Aorta (tissue), 5 donors: ENCODE measurements at regions of chr10 and their contacts with region 1.

Region 1: GRCh38 chr10:84537447-84537931 is 209.1 kb downstream of the CCSER2 start:
- DNase-seq: peak; percentile 63 to 82
- ATAC-seq: peak; percentile 87
- H3K4me3 ChIP-seq: no peak overlapping the region
- H3K27ac ChIP-seq: no peak overlapping the region
- H3K4me1 ChIP-seq: no peaks in the 10 kb centered on the region
- H3K27me3 ChIP-seq: no peaks in the 10 kb centered on the region

Region 2: GRCh38 chr10:84139126-84140035 is 398.1 kb before region 1 on chr10 and contains the start of gene GHITM:
- intact Hi-C with region 1: loop called in 1 of 2 experiments (anchors 10 kb)
- DNase-seq: peak; percentile 99
- ATAC-seq: peak; percentile 99
- H3K4me3 ChIP-seq: peak within 1 kb of the TSS; percentile 73 to 90
- H3K27ac ChIP-seq: peak within 1 kb of the TSS; percentile 51 to 74
- H3K4me1 ChIP-seq: peaks cover 0 to 3% of the 10 kb centered on the region in 2 donors
- H3K27me3 ChIP-seq: no peaks in the 10 kb centered on the region
- total RNA-seq, gene GHITM: 77.2 to 88.3 TPM

Region 3: DNA sequence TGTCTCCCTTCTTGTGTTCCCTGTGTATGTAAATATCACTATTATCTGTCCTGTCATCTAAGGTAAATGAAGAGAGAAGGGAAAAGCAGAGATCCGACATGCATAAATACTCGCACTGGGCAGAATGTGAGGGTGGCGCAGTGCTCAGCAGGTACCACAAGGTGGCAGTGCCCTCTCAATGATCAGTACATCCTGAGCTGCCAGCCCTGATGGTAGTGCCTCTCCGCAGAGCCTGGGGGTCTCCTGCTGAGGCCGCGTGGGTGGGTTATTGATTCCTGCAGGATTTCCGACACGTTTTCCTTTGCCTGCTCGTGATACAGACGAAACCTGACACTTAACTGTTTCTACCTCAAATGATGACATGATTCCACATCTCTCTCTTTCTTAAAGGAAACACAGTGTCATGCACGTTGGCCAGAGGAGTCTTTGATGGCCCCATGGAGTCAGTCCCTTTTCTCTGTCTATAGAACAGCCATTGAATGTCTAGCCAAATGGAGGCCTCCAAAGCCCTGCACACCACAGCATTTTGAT is 272.8 kb before region 1 on chr10:
- intact Hi-C with region 1: loop called (anchors 1 to 2 kb)
- DNase-seq: peak; percentile 75 to 89
- ATAC-seq: peak; percentile 82
- H3K4me3 ChIP-seq: no peak overlapping the region
- H3K27ac ChIP-seq: no peak overlapping the region
- H3K4me1 ChIP-seq: no peaks in the 10 kb centered on the region
- H3K27me3 ChIP-seq: no peaks in the 10 kb centered on the region

Region 4: DNA sequence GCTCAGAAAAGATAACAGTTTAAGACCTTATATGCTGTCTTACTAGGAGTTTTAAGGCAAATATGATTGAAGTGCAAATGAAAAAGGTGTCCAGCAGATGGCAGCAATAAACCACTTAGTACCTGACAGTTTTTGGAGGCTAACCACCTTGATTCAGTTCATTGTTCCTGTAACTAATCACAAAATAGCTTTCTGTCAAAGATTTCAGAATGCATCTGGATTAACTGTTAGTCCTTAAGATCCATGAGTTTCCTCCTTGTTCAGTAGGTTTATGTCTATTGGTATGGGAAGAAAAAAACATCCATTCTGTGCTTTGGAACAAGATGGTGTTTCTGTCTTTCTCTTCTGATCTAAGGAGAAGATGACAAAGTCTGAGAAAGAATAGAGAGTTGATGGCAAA is 162.5 kb before region 1 on chr10:
- intact Hi-C with region 1: loop called (anchors 2 kb)
- DNase-seq: no peak
- ATAC-seq: no peak
- H3K4me3 ChIP-seq: no peak overlapping the region
- H3K27ac ChIP-seq: no peak overlapping the region
- H3K4me1 ChIP-seq: peaks cover 0 to 1% of the 10 kb centered on the region in 2 donors
- H3K27me3 ChIP-seq: no peaks in the 10 kb centered on the region

Region 5: GRCh38 chr10:84499846-84500245 is 37.6 kb before region 1 on chr10:
- intact Hi-C with region 1: no loop called
- DNase-seq: no peak
- ATAC-seq: no peak
- H3K4me3 ChIP-seq: no peak overlapping the region
- H3K27ac ChIP-seq: no peak overlapping the region
- H3K4me1 ChIP-seq: peaks cover 0 to 3% of the 10 kb centered on the region in 2 donors
- H3K27me3 ChIP-seq: no peaks in the 10 kb centered on the region

Region 6: GRCh38 chr10:84613336-84614021 is 76.0 kb after region 1 on chr10:
- intact Hi-C with region 1: no loop called
- DNase-seq: no peak
- ATAC-seq: no peak
- H3K4me3 ChIP-seq: no peak overlapping the region
- H3K27ac ChIP-seq: no peak overlapping the region
- H3K4me1 ChIP-seq: no peaks in the 10 kb centered on the region
- H3K27me3 ChIP-seq: peaks cover 0 to 4% of the 10 kb centered on the region in 2 donors

Region 7: GRCh38 chr10:86376852-86377796 is 1839.6 kb after region 1 on chr10:
- intact Hi-C with region 1: loop called (anchors 2 kb)
- DNase-seq: peak; percentile 76 to 95
- ATAC-seq: peak; percentile 93
- H3K4me3 ChIP-seq: no peak overlapping the region
- H3K27ac ChIP-seq: no peak overlapping the region
- H3K4me1 ChIP-seq: no peaks in the 10 kb centered on the region
- H3K27me3 ChIP-seq: no peaks in the 10 kb centered on the region